RWPE1 (cell line): ENCODE measurements at regions of chr17 and their contacts with region 1.

Region 1: GRCh38 chr17:34542700-34543336 is 36.6 kb upstream of the TMEM132E start:
- DNase-seq: peak; percentile 14
- H3K27ac ChIP-seq: no peak overlapping the region
- CTCF ChIP-seq: peak; percentile 84

Region 2: GRCh38 chr17:34637548-34638525 is 95.0 kb after region 1 on chr17:
- CTCF ChIA-PET with region 1: interaction called, 14 read pairs
- POLR2A ChIA-PET with region 1: interaction called, 3 read pairs
- DNase-seq: peak; percentile 72
- H3K27ac ChIP-seq: no peak overlapping the region
- CTCF ChIP-seq: peak; percentile 67